ENCODE measurements at regions of chr16 and their contacts with region 1.

Region 1: DNA sequence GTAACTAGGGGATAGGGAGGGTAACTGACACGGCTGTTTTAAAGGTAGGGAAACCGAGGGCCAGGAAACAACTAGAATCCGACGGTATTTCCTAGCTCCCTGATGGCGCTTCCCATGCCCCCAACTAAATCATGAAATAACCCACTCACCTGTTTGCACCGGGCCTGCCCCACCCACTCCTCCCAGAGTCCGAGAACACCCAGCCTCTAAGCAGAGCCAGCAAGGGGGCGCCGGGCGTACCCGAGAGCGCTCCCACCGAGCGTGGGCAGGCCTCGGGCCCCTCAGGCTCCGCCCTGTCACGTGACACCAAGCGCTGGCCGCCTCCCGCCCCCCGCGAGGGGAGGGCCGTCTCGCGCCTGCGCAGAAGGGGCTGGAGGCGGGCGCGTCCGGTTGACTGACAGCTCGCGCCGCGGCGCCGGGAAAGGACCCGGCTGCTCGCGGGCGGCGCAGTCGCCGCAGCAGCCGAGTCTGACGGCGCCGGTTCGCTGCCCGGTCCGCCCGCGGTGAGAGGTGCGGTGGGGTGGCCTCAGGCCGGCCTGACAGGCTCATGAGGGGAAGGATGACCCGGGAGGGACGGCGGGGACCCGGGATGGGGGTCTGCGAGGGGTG is at the start of gene KIAA0513:
- DNase-seq: peak; percentile 73 to 95
- H3K4me3 ChIP-seq: peak within 1 kb of the TSS; percentile 93
- H3K27ac ChIP-seq: peak within 1 kb of the TSS; percentile 52
- H3K4me1 ChIP-seq: peaks cover 52% of the 10 kb centered on the region
- H3K27me3 ChIP-seq: no peaks in the 10 kb centered on the region
- CTCF ChIP-seq: no peak; the same call in 1 of the 2 replicates
- total RNA-seq, gene KIAA0513: 4.2 and 4.3 TPM in 2 replicates

Region 2: GRCh38 chr16:84841770-84842300 is 185.6 kb before region 1 on chr16:
- CTCF ChIA-PET with region 1: no interaction called
- POLR2A ChIA-PET with region 1: interaction called, 18 read pairs
- intact Hi-C with region 1: no loop called
- DNase-seq: peak; percentile 87 to 92
- H3K4me3 ChIP-seq: no peak overlapping the region; the same call in 1 of the 2 replicates
- H3K27ac ChIP-seq: peak overlapping the region; percentile 80
- H3K4me1 ChIP-seq: peaks cover 48% of the 10 kb centered on the region
- H3K27me3 ChIP-seq: no peaks in the 10 kb centered on the region
- CTCF ChIP-seq: no peak

Region 3: DNA sequence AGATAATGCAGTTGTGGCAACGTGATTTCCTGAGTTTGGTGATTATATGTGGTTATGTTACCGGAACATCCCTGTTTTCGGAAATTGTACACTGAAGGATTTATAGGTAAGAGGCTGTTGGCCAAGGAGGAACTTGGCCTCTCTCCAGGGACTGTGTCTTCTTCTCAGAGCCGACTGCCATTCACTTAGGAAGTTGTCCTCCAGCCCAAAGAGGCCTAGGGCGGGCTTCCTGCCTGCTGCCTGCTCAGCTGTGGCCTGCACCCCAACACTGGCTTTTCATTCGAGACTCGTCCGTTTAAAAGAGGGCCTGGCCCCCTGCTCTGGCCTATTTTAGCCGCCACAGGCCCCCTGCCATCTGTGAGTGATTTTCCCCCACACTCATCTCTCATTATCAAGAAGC is 80.4 kb before region 1 on chr16:
- CTCF ChIA-PET with region 1: no interaction called
- POLR2A ChIA-PET with region 1: no interaction called
- intact Hi-C with region 1: no loop called
- DNase-seq: no peak
- H3K4me3 ChIP-seq: no peak overlapping the region
- H3K27ac ChIP-seq: no peak overlapping the region
- H3K4me1 ChIP-seq: peaks cover 3% of the 10 kb centered on the region
- H3K27me3 ChIP-seq: no peaks in the 10 kb centered on the region
- CTCF ChIP-seq: no peak

Region 4: DNA sequence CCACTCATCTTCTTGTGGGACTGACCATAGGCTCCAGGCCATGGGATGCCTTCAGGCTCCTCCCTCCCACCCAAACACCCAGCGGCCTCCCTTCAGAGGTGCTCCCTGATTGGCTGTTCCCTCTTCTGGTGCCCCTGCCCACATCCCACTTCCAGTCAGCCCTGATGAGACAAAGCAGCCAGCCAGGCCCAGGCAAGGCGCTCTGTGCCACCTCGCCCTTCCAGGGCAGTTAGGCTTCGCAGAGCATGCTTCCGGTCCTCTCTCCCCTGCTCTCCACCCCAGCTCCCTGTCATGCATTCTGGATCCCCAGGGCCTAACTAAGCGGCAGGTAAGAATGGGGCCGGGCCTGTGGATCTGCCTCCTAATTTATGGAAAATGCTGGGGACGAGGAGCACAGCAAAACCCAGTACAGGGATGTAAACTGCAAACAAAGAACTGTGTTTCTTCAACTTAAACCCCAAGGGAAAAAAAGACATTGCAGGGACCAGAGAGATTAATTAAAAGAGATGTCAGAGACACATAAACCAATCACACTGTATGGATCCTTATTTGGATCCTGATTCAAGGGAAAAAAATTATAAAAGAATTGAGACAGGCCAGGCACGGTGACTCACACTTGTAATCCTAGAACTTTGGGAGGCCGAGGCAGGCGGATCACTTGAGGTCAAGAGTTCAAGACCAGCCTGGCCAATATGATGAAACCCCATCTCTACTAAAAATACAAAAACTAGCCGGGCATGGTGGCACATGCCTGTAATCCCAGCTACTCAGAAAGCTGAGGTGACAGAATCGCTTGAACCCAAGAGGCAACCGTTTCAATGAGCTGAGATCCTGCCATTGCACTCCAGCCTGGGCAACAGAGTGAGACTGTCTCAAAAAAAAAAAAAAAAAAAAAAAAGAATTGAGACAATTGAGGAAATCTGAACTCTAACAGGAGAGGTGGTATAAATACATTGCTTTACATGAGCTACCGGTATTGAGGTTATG is 42.1 kb before region 1 on chr16:
- CTCF ChIA-PET with region 1: interaction called, 23 read pairs
- POLR2A ChIA-PET with region 1: interaction called, 6 read pairs
- intact Hi-C with region 1: loop called (anchors 5 kb)
- DNase-seq: peak; percentile 57 to 75
- H3K4me3 ChIP-seq: no peak overlapping the region
- H3K27ac ChIP-seq: peak overlapping the region; percentile 77
- H3K4me1 ChIP-seq: peaks cover 24% of the 10 kb centered on the region
- H3K27me3 ChIP-seq: no peaks in the 10 kb centered on the region
- CTCF ChIP-seq: no peak

Region 5: DNA sequence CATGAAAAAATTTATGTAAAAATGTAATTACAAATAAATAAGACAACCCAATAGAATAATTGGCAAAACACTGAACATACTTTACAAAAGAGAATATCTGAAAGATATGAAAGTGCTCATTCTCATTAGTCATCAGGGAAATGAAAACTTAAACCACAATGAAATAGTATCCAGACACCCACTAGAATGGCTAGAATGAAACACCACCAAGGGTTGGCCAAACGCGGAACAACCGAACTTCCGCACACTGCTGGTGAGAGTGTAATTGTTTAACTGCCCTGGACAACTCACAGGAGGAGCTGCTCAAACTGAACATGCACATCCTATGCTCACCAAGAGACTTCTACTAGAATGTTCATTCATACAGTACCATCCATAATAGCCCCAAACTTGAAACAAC is 10.3 kb before region 1 on chr16:
- CTCF ChIA-PET with region 1: no interaction called
- POLR2A ChIA-PET with region 1: no interaction called
- intact Hi-C with region 1: loop called (anchors 1 kb)
- DNase-seq: no peak
- H3K4me3 ChIP-seq: no peak overlapping the region
- H3K27ac ChIP-seq: no peak overlapping the region
- H3K4me1 ChIP-seq: peaks cover 22% of the 10 kb centered on the region; the same call in 1 of the 2 replicates
- H3K27me3 ChIP-seq: no peaks in the 10 kb centered on the region
- CTCF ChIP-seq: no peak

Measured in PC-9 (cell line).